B cell (primary cell): ENCODE measurements at regions of chr12 and their contacts with region 1.

Region 1: DNA sequence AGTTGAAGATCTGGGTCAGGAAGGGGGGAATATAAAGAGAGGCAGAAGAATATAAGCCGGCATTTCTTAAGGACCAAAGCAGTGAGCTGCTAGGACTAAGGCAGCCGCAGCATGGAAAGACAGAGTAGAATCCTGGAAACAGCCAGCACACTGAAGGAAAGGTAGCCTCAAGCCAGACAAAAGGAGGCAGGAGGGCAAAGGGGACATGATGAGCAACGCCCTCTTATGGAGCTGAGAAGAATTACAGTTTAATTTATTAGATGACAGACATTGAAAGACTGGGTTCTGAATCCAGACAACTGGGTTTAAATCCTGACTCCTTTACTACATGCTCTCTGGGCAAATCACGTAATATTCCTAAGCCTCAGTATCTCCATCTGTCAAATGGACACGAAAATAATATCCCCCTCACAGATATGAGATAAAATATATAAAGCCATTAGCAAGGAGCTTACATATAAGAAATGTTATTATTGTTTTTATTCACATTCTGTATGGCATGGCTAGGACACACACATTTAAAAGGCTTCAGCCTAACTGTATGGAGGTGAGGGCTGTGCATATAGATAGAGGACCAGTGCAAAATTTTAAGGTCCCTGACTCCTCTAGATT is 8.1 kb upstream of the PCED1B start:
- DNase-seq: peak; percentile 43
- ATAC-seq: no peak
- H3K4me3 ChIP-seq: no peak overlapping the region
- H3K4me3 Mint-ChIP-seq: no peak overlapping the region
- H3K27ac ChIP-seq: no peak overlapping the region
- H3K27ac Mint-ChIP-seq: no peak overlapping the region
- H3K4me1 ChIP-seq: no peaks in the 10 kb centered on the region
- H3K4me1 Mint-ChIP-seq: no peaks in the 10 kb centered on the region
- H3K27me3 ChIP-seq: no peaks in the 10 kb centered on the region
- H3K27me3 Mint-ChIP-seq: no peaks in the 10 kb centered on the region
- CTCF ChIP-seq: peak; percentile 63

Region 2: DNA sequence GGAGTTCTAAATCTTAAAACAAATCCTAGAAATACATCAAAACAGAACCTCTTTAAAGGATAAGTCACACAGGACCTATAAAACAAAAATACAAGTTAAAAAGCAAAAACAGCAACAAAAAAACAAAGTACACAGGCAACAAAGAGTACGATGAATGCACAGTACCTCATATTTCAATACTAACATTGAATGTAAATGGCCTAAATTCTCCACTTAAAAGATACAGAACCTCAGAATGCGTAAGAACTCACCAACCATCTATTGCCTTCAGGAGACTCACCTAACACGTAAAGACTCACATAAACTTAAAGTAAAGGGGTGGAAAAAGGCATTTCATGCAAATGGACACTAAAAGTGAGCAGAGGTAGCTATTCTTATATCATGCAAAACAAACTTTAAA is 180.6 kb after region 1 on chr12:
- CTCF ChIA-PET with region 1: no interaction called
- POLR2A ChIA-PET with region 1: no interaction called
- intact Hi-C with region 1: no loop called
- DNase-seq: no peak
- ATAC-seq: no peak
- H3K4me3 ChIP-seq: no peak overlapping the region
- H3K4me3 Mint-ChIP-seq: no peak overlapping the region
- H3K27ac ChIP-seq: no peak overlapping the region
- H3K27ac Mint-ChIP-seq: no peak overlapping the region
- H3K4me1 ChIP-seq: no peaks in the 10 kb centered on the region
- H3K4me1 Mint-ChIP-seq: no peaks in the 10 kb centered on the region
- H3K27me3 ChIP-seq: no peaks in the 10 kb centered on the region
- H3K27me3 Mint-ChIP-seq: no peaks in the 10 kb centered on the region
- CTCF ChIP-seq: no peak

Region 3: GRCh38 chr12:47408171-47408871 is 337.0 kb after region 1 on chr12:
- CTCF ChIA-PET with region 1: interaction called, 10 read pairs
- POLR2A ChIA-PET with region 1: no interaction called
- intact Hi-C with region 1: no loop called
- DNase-seq: peak; percentile 87
- ATAC-seq: peak; percentile 98
- H3K4me3 ChIP-seq: no peak overlapping the region
- H3K4me3 Mint-ChIP-seq: no peak overlapping the region
- H3K27ac ChIP-seq: peak overlapping the region; percentile 41 to 55
- H3K27ac Mint-ChIP-seq: peak overlapping the region; percentile 73
- H3K4me1 ChIP-seq: peaks cover 18 to 19% of the 10 kb centered on the region in 2 donors
- H3K4me1 Mint-ChIP-seq: peaks cover 21% of the 10 kb centered on the region
- H3K27me3 ChIP-seq: no peaks in the 10 kb centered on the region
- H3K27me3 Mint-ChIP-seq: no peaks in the 10 kb centered on the region
- CTCF ChIP-seq: peak; percentile 83